MCF 10A (cell line): ENCODE measurements at regions of chr6 and their contacts with region 1.

Region 1: DNA sequence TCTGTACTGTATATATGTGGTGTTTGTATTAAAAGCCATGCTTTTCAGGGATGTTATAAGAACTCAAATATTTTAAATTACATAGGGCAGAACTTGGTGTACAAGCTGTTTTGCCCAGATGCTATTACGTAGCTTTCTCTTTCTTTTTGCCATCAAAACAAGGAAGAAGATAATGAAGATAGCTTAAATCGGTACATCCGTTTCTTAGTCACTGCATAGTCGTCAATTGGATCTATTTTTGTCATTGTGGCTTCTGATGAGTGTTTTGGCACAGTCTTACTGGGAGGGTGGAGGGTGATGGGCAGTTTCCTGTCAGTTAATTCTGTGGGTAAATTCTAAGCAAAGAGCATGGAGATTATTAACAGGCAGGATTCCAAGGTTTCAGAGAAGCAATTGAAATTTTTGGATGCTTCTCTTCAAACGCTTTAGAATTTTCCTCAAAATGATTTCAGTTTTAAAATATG is 649.1 kb upstream of the GJE1 start:
- DNase-seq: peak; percentile 73
- H3K4me3 Mint-ChIP-seq: peak overlapping the region; percentile 64
- H3K27ac Mint-ChIP-seq: peak overlapping the region; percentile 81
- H3K4me1 Mint-ChIP-seq: peaks cover 10% of the 10 kb centered on the region
- H3K27me3 Mint-ChIP-seq: no peaks in the 10 kb centered on the region
- CTCF ChIP-seq: no peak

Region 2: DNA sequence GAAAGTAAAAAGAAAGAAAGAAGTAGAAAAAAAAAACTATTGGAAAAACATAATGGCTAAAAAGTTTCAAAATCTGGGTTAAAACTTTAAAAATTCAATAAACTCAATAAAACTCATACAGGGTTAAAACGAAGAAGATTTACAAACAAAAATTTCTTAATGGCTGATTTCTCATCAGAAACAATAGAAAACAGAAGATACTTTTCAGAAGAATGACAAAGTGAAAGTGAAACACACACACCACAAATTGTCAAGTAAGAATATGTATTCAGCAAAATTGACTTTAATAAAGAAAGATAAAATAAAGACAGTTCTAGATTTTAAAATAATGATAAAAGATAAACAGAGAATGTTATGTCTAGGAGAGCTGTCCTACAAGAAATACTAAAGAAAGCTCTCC is 30.2 kb after region 1 on chr6:
- CTCF ChIA-PET with region 1: no interaction called
- POLR2A ChIA-PET with region 1: interaction called, 14 read pairs
- intact Hi-C with region 1: no loop called
- DNase-seq: no peak
- H3K4me3 Mint-ChIP-seq: peak overlapping the region; percentile 35
- H3K27ac Mint-ChIP-seq: peak overlapping the region; percentile 77
- H3K4me1 Mint-ChIP-seq: peaks cover 12% of the 10 kb centered on the region
- H3K27me3 Mint-ChIP-seq: no peaks in the 10 kb centered on the region
- CTCF ChIP-seq: no peak